Breast epithelium (tissue), 4 donors: ENCODE measurements at regions of chr19 and their contacts with region 1.

Region 1: GRCh38 chr19:43651758-43652545 is 12.3 kb upstream of the CADM4 start:
- DNase-seq: peak; percentile 60 to 71
- H3K4me3 ChIP-seq: peak overlapping the region in 2 of 3 donors; percentile 21 to 23
- H3K27ac ChIP-seq: no peak overlapping the region
- H3K4me1 ChIP-seq: no peaks in the 10 kb centered on the region
- H3K27me3 ChIP-seq: no peaks in the 10 kb centered on the region
- CTCF ChIP-seq: peak; percentile 53 to 82 (median 77)
- POLR2A ChIP-seq: no peak

Region 2: DNA sequence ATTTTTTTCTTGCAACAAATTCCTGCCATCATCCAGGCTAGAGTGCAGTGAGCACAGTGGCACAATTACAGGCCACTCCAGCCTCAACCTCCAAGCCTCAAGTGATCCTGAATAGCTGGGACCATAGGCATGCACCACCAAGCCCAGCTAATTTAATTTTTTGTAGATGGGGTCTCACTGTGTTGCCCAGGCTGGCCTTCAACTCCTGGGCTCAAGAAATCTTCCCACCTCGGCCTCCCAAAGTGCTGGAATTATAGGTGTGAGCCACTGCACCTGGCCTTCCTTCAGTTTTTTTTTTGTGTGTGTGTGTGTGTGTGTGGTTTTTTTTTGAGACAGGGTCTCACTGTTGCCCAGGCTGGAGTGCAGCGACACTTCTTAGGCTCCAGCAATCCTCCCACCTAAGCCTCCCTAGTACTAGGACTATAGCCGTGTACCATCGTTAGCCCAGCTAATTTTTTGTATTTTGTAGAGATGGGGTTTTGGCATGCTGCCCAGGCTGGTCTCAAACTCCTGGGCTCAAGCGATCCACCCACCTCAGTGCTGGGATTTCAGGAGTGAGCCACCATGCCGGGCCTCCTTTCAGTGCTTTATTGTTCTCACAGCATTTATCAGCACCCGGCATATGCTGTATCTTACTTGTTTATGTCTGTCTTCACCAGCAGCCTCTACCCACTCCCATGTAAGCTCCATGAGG is 45.9 kb before region 1 on chr19:
- intact Hi-C with region 1: loop called (anchors 1 kb)
- DNase-seq: no peak
- H3K4me3 ChIP-seq: no peak overlapping the region
- H3K27ac ChIP-seq: peak overlapping the region; percentile 69 to 75
- H3K4me1 ChIP-seq: no peaks in the 10 kb centered on the region
- H3K27me3 ChIP-seq: no peaks in the 10 kb centered on the region
- CTCF ChIP-seq: no peak
- POLR2A ChIP-seq: no peak